CD8-positive, alpha-beta T cell (primary cell): ENCODE measurements at regions of chr9 and their contacts with region 1.

Region 1: GRCh38 chr9:72592502-72593403 is 71.3 kb downstream of the TMC1 start:
- DNase-seq: peak in 5 of 9 experiments; percentile 29 to 71 (median 50)
- ATAC-seq: peak; percentile 71
- H3K4me3 ChIP-seq: no peak overlapping the region
- H3K4me3 Mint-ChIP-seq: no peak overlapping the region
- H3K27ac ChIP-seq: no peak overlapping the region
- H3K27ac Mint-ChIP-seq: no peak overlapping the region
- H3K4me1 ChIP-seq: no peaks in the 10 kb centered on the region
- H3K4me1 Mint-ChIP-seq: peaks cover 3% of the 10 kb centered on the region
- H3K27me3 ChIP-seq: no peaks in the 10 kb centered on the region
- H3K27me3 Mint-ChIP-seq: peaks cover 5% of the 10 kb centered on the region
- CTCF ChIP-seq: peak; percentile 89

Region 2: GRCh38 chr9:72038890-72039410 is 553.8 kb before region 1 on chr9:
- CTCF ChIA-PET with region 1: no interaction called
- POLR2A ChIA-PET with region 1: no interaction called
- intact Hi-C with region 1: loop called (anchors 2 to 5 kb)
- DNase-seq: peak; percentile 22 to 78 (median 61)
- ATAC-seq: peak; percentile 67
- H3K4me3 ChIP-seq: no peak overlapping the region
- H3K4me3 Mint-ChIP-seq: no peak overlapping the region
- H3K27ac ChIP-seq: no peak overlapping the region
- H3K27ac Mint-ChIP-seq: no peak overlapping the region
- H3K4me1 ChIP-seq: no peaks in the 10 kb centered on the region
- H3K4me1 Mint-ChIP-seq: peaks cover 5% of the 10 kb centered on the region
- H3K27me3 ChIP-seq: no peaks in the 10 kb centered on the region
- H3K27me3 Mint-ChIP-seq: peaks cover 16% of the 10 kb centered on the region
- CTCF ChIP-seq: peak; percentile 87

Region 3: GRCh38 chr9:72280913-72281500 is 311.7 kb before region 1 on chr9:
- CTCF ChIA-PET with region 1: interaction called, 184 read pairs
- POLR2A ChIA-PET with region 1: interaction called, 3 read pairs
- intact Hi-C with region 1: loop called (anchors 1 kb)
- DNase-seq: peak; percentile 36 to 81 (median 68)
- ATAC-seq: peak; percentile 87
- H3K4me3 ChIP-seq: no peak overlapping the region
- H3K4me3 Mint-ChIP-seq: no peak overlapping the region
- H3K27ac ChIP-seq: no peak overlapping the region
- H3K27ac Mint-ChIP-seq: no peak overlapping the region
- H3K4me1 ChIP-seq: no peaks in the 10 kb centered on the region
- H3K4me1 Mint-ChIP-seq: no peaks in the 10 kb centered on the region
- H3K27me3 ChIP-seq: no peaks in the 10 kb centered on the region
- H3K27me3 Mint-ChIP-seq: peaks cover 3% of the 10 kb centered on the region
- CTCF ChIP-seq: peak; percentile 92

Region 4: DNA sequence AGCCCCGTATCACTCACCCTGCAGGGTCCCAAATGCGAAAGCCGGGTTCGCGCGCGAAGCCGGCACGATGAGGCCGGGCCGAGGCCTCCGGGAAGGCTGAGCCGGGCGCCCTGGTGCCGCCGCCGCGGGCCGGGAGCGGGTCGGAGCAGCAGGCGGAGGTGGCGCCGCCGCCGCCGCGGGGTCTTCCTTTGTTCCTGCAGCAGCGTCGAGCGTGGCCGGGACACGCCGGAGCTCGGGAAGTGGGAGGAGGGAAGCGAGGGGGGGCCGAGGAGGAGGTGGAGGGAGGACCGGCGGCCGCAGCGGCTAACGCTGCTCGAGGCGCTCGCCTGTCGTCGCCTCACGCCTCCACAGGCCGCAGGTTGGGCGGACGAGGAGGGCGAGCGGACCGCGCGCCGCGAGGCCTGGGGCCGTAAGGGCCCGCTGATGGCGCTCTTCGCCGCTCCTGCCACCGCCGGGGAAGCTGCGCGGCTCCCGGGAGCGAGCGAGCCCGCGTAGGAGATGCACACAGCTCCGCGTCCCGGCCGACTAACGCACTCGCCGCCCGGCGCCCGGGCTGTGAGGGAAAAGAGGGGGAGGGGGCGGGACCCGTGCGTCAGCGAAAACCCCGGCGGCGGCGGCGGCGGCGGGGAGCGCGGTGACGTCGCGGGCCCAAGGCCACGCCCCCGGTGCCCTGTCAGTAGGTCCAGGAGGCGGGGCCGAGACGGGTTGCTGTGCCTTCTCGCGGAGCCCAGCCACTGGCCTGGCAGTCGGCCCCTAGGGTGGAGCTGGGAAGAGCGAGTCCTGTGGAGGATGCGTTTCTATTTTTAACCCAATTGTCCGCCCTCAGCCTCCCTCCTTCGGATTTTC is 227.9 kb before region 1 on chr9 and contains the start of gene ZFAND5:
- CTCF ChIA-PET with region 1: interaction called, 6 read pairs
- POLR2A ChIA-PET with region 1: no interaction called
- intact Hi-C with region 1: loop called in 1 of 2 experiments (anchors 2 kb)
- DNase-seq: peak; percentile 86 to 98 (median 94)
- ATAC-seq: peak; percentile 79
- H3K4me3 ChIP-seq: peak within 1 kb of the TSS; percentile 74 to 88
- H3K4me3 Mint-ChIP-seq: peak within 1 kb of the TSS; percentile 91
- H3K27ac ChIP-seq: peak within 1 kb of the TSS; percentile 95 to 97
- H3K27ac Mint-ChIP-seq: peak within 1 kb of the TSS; percentile 98
- H3K4me1 ChIP-seq: peaks cover 41% of the 10 kb centered on the region
- H3K4me1 Mint-ChIP-seq: peaks cover 41% of the 10 kb centered on the region
- H3K27me3 ChIP-seq: no peaks in the 10 kb centered on the region
- H3K27me3 Mint-ChIP-seq: no peaks in the 10 kb centered on the region
- CTCF ChIP-seq: no peak
- total RNA-seq, gene ZFAND5: 355 to 361 TPM

Region 5: DNA sequence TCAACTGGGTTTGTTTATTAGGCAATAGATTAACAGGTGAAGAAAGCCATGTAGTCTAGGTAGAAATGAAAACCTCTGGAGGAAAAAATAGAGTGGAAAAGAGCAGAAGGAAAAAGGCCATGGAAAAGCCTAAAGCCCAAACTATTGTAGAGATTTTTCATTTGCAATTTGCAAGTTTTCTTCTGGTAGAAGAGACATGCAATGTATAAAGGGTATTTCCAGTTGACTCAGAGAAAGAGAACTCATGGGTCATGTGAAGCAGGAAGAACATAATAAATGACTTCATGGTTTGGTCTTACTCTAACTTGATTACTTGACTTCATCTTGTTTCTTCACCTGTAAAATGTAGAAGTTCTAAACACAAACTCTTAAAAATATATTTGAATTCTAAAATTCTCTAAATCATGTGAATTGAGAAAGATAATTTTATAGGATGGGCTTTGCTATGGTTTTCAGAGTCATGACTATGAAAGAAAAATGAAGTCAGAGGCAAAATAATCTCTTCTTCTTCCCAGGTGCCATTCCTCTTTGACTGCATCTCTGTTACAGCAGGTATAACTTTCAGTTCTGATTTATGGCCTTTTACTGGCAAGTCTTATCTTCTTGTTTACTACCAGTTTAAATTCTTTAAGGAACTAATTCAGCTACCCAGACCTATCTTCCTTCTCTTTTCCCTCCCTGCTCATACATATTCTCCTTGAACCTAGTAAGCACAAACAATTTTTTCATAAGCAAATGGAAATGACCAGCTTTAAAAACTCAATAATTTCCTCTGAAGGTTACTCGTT is 119.1 kb before region 1 on chr9:
- CTCF ChIA-PET with region 1: no interaction called
- POLR2A ChIA-PET with region 1: no interaction called
- intact Hi-C with region 1: loop called in 1 of 2 experiments (anchors 10 kb)
- DNase-seq: peak in 1 of 9 experiments; percentile 12
- ATAC-seq: peak; percentile 26
- H3K4me3 ChIP-seq: no peak overlapping the region
- H3K4me3 Mint-ChIP-seq: no peak overlapping the region
- H3K27ac ChIP-seq: no peak overlapping the region
- H3K27ac Mint-ChIP-seq: no peak overlapping the region
- H3K4me1 ChIP-seq: peaks cover 6% of the 10 kb centered on the region
- H3K4me1 Mint-ChIP-seq: peaks cover 22% of the 10 kb centered on the region
- H3K27me3 ChIP-seq: no peaks in the 10 kb centered on the region
- H3K27me3 Mint-ChIP-seq: no peaks in the 10 kb centered on the region
- CTCF ChIP-seq: no peak

Region 6: GRCh38 chr9:72577212-72577753 is 15.5 kb before region 1 on chr9:
- CTCF ChIA-PET with region 1: interaction called, 23 read pairs
- POLR2A ChIA-PET with region 1: interaction called, 3 read pairs
- intact Hi-C with region 1: no loop called
- DNase-seq: no peak
- ATAC-seq: no peak
- H3K4me3 ChIP-seq: no peak overlapping the region
- H3K4me3 Mint-ChIP-seq: no peak overlapping the region
- H3K27ac ChIP-seq: no peak overlapping the region
- H3K27ac Mint-ChIP-seq: no peak overlapping the region
- H3K4me1 ChIP-seq: no peaks in the 10 kb centered on the region
- H3K4me1 Mint-ChIP-seq: no peaks in the 10 kb centered on the region
- H3K27me3 ChIP-seq: no peaks in the 10 kb centered on the region
- H3K27me3 Mint-ChIP-seq: no peaks in the 10 kb centered on the region
- CTCF ChIP-seq: no peak

Region 7: DNA sequence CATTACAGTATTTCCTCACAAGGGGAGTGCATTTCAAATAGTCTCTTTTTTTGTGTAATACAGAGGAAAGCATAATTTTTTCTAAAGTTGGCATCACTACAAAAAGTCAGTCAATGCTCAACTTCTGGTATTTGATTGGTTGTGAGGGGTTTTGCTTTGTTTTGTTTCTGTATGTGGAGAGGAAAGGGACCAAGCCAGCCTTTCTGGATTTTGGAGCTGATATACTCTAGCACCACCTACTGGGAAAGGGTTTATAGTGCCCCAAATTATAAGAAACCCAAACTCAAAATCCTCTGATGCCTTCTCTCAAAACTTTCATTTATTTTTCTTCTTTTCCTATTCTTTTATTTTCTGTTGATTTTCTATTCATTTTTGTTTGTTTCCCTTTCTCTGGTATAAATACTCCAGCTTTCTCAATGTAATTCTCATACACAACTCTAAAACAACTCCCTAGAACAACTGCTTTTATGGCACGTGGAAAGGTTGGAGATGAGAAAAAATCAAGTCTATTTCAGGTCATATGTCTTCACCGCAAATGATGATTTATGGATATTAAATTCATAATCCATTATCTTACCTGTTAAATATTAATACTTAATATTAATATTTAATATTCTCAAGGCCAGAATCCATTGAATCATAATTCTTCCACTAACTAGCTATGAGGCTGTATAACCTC is 489.4 kb after region 1 on chr9:
- CTCF ChIA-PET with region 1: interaction called, 3 read pairs
- POLR2A ChIA-PET with region 1: no interaction called
- intact Hi-C with region 1: loop called in 1 of 2 experiments (anchors 1 kb)
- DNase-seq: peak in 2 of 9 experiments; percentile 33 to 43
- ATAC-seq: no peak
- H3K4me3 ChIP-seq: no peak overlapping the region
- H3K4me3 Mint-ChIP-seq: no peak overlapping the region
- H3K27ac ChIP-seq: no peak overlapping the region
- H3K27ac Mint-ChIP-seq: no peak overlapping the region
- H3K4me1 ChIP-seq: no peaks in the 10 kb centered on the region
- H3K4me1 Mint-ChIP-seq: no peaks in the 10 kb centered on the region
- H3K27me3 ChIP-seq: peaks cover 0 to 2% of the 10 kb centered on the region in 2 experiments
- H3K27me3 Mint-ChIP-seq: peaks cover 12% of the 10 kb centered on the region
- CTCF ChIP-seq: peak; percentile 75